A549 (cell line): ENCODE measurements at regions of chr1 and their contacts with region 1.

Region 1: DNA sequence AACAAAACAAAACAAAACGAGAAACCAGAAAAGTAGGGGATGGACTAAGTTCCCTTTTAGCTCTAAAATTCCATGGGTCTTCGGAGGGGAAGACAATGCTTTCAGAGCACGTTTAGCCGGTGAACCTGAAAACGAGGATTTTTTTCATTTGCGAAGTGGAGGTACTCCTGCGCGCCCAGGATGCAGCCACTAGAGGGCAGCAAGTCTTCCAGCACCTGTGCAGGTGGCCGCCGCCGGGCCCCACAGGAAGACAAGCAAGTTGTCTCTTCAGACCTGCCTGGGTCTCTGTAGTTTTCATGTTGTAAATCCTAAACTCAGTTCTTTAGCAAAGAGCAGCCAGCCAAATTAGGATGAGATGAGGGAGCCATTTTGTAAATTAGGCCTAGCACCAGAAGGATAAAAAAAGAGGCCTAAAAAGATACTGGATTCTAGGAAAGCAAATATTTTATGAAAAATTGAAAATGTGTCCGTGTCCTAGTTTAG is 17.7 kb upstream of the SNX27 start:
- DNase-seq: peak; percentile 80
- ATAC-seq: peak; percentile 67 to 75; a peak in 5 of 6 replicates
- H3K4me3 ChIP-seq: no peak overlapping the region
- H3K27ac ChIP-seq: peak overlapping the region; percentile 8 to 15; a peak in 2 of 6 replicates
- H3K4me1 ChIP-seq: peaks cover 27% of the 10 kb centered on the region
- CTCF ChIP-seq: peak; percentile 91
- EP300 ChIP-seq: no peak
- POLR2A ChIP-seq: no peak
- RAD21 ChIP-seq: peak; percentile 86 to 89

Region 2: GRCh38 chr1:151539990-151540981 is 53.9 kb before region 1 on chr1 and contains the start of gene TUFT1:
- CTCF ChIA-PET with region 1: interaction called, 14 read pairs
- POLR2A ChIA-PET with region 1: no interaction called
- DNase-seq: peak; percentile 82 to 94
- ATAC-seq: peak; percentile 75 to 88
- H3K4me3 ChIP-seq: peak within 1 kb of the TSS; percentile 93
- H3K27ac ChIP-seq: peak within 1 kb of the TSS; percentile 79 to 85
- H3K4me1 ChIP-seq: peaks cover 71% of the 10 kb centered on the region
- CTCF ChIP-seq: no peak
- EP300 ChIP-seq: no peak
- POLR2A ChIP-seq: peak; percentile 100
- RAD21 ChIP-seq: peak in 1 of 2 experiments; percentile 7; a peak in 2 of 5 replicates
- polyA plus RNA-seq, gene TUFT1: 24.5 and 27.5 TPM in 2 replicates

Region 3: GRCh38 chr1:151574545-151575529 is 19.3 kb before region 1 on chr1:
- CTCF ChIA-PET with region 1: interaction called, 147 read pairs
- POLR2A ChIA-PET with region 1: no interaction called
- DNase-seq: peak; percentile 67 to 72
- ATAC-seq: peak; percentile 73 to 81
- H3K4me3 ChIP-seq: no peak overlapping the region
- H3K27ac ChIP-seq: peak overlapping the region; percentile 48 to 78; a peak in 5 of 6 replicates
- H3K4me1 ChIP-seq: peaks cover 51% of the 10 kb centered on the region
- CTCF ChIP-seq: no peak
- EP300 ChIP-seq: no peak
- POLR2A ChIP-seq: no peak
- RAD21 ChIP-seq: no peak

Region 4: DNA sequence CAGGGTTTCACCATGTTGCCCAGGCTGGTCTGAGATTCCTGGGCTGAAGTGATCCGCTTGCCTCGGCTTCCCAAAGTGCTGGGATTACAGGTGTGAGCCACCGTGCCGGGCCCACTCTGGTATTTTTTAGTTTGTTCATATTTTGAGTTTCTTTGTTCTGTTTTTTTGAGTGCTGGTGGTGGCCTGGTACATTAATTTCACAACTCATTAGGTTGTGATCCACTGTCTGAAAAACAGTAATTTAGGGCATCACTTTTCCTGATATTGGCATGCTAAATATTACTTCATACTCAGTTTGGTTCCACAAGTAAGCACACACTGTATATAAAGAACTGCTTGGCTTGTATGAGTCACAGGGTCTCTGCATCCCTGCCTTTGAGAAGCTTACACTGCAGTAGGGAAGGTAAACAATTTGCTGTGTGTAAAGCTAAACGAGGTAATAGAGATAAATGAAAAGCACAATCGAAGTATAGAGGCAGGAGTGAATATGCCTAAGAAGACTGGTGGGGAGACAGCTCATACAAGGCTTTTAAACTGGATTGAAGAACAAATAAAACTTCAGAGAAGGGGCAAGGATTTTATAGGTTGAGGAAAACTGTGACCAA is 25.4 kb after region 1 on chr1:
- CTCF ChIA-PET with region 1: interaction called, 29 read pairs
- POLR2A ChIA-PET with region 1: no interaction called
- DNase-seq: peak in 1 of 2 experiments; percentile 40
- ATAC-seq: peak; percentile 83 to 89
- H3K4me3 ChIP-seq: no peak overlapping the region
- H3K27ac ChIP-seq: peak overlapping the region; percentile 52 to 65; a peak in 4 of 6 replicates
- H3K4me1 ChIP-seq: peaks cover 81% of the 10 kb centered on the region
- CTCF ChIP-seq: no peak
- EP300 ChIP-seq: no peak
- POLR2A ChIP-seq: no peak
- RAD21 ChIP-seq: no peak

Region 5: GRCh38 chr1:151661751-151662150 is 67.6 kb after region 1 on chr1:
- CTCF ChIA-PET with region 1: interaction called, 13 read pairs
- POLR2A ChIA-PET with region 1: no interaction called
- DNase-seq: no peak
- ATAC-seq: no peak
- H3K4me3 ChIP-seq: no peak overlapping the region
- H3K27ac ChIP-seq: no peak overlapping the region
- H3K4me1 ChIP-seq: no peaks in the 10 kb centered on the region
- CTCF ChIP-seq: no peak
- EP300 ChIP-seq: no peak
- POLR2A ChIP-seq: no peak
- RAD21 ChIP-seq: no peak

Region 6: DNA sequence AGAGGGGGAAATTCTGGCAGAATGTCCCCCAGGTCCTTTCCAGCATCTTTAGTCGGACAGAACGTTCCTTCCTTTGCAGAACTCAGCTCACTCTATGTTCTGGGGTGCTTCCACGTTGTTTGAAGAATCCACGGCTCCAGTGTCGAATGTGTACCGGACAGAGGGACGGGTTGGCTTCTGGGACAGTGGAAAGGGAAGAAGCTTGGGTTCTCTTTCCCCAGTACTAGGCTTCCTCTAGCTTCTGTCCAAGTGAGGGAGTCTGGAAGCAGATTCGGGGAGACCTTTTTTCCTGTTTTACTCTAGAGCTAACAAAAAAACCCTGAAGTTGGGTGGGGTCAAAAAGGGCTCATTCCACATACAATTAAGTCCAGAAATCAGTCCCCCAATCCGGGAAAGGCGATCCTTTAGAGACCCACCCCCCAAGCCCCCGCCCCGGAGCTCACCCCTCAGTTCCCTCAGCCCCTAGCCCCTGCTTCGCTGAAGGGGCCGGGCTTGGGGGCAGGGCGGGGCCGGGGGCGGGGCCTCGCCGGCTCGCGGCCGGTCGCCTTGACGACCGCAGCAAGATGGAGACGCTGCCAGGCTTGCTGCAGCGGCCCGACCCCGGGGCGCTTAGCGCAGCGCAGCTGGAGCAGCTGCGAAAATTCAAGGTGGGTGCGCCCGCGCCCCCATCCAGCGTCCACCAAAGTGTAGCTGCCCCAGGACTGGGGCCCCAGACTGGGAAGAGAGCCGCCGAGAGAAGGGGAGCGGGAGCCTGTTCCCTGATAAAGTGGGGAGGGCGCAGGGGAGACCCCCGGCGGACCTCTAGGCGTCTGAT is 127.0 kb after region 1 on chr1 and contains the start of gene RIIAD1:
- CTCF ChIA-PET with region 1: interaction called, 11 read pairs
- POLR2A ChIA-PET with region 1: no interaction called
- DNase-seq: peak in 1 of 2 experiments; percentile 62
- ATAC-seq: peak; percentile 82 to 85
- H3K4me3 ChIP-seq: peak within 1 kb of the TSS; percentile 42
- H3K27ac ChIP-seq: peak within 1 kb of the TSS in 1 of 2 experiments; percentile 21; a peak in 1 of 6 replicates
- H3K4me1 ChIP-seq: peaks cover 23% of the 10 kb centered on the region; the same call in 2 of the 3 replicates
- CTCF ChIP-seq: peak; percentile 39
- EP300 ChIP-seq: no peak
- POLR2A ChIP-seq: no peak
- RAD21 ChIP-seq: peak; percentile 23 to 24; a peak in 1 of 5 replicates
- polyA plus RNA-seq, gene RIIAD1: not detected in 2 replicates

Region 7: GRCh38 chr1:151739590-151740375 is 145.6 kb after region 1 on chr1:
- CTCF ChIA-PET with region 1: interaction called, 23 read pairs
- POLR2A ChIA-PET with region 1: no interaction called
- DNase-seq: no peak
- ATAC-seq: no peak
- H3K4me3 ChIP-seq: no peak overlapping the region
- H3K27ac ChIP-seq: no peak overlapping the region
- H3K4me1 ChIP-seq: no peaks in the 10 kb centered on the region
- CTCF ChIP-seq: no peak
- EP300 ChIP-seq: no peak
- POLR2A ChIP-seq: no peak
- RAD21 ChIP-seq: no peak